Panc1 (cell line): ENCODE measurements at regions of chr6 and their contacts with region 1.

Region 1: DNA sequence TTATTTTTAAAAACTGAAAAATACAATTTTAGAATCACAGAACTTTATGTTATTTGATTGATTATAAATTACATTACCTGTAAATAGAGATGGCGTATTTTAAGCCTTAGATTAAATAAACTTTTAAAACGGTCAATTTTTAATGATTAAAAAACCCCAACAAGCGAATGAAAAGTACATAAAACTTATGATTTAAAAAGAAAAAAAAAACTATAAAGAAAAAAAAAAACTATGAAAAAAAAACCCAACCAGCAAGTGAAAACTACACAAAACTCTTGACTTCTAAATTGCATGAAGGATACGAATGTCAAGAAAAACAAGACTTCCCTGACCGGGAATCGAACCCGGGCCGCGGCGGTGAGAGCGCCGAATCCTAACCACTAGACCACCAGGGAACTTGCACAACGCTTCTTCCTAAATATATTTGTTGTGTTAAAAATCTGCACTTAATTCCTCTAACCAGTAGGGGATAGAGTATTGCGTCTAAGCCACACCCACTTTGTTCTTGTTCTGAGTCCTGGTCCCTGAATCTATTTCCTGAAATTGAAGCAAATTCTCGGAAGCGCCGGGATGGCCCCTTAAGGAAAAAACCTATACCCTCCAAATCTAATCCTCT is 10.7 kb upstream of the NCOA7 start:
- DNase-seq: peak; percentile 96
- ATAC-seq: peak; percentile 95
- H3K4me3 ChIP-seq: peak overlapping the region; percentile 88 to 93
- H3K27ac ChIP-seq: peak overlapping the region; percentile 97
- H3K4me1 ChIP-seq: peaks cover 5% of the 10 kb centered on the region
- H3K27me3 ChIP-seq: peaks cover 5% of the 10 kb centered on the region
- CTCF ChIP-seq: peak; percentile 17; the same call in 1 of the 2 replicates

Region 2: DNA sequence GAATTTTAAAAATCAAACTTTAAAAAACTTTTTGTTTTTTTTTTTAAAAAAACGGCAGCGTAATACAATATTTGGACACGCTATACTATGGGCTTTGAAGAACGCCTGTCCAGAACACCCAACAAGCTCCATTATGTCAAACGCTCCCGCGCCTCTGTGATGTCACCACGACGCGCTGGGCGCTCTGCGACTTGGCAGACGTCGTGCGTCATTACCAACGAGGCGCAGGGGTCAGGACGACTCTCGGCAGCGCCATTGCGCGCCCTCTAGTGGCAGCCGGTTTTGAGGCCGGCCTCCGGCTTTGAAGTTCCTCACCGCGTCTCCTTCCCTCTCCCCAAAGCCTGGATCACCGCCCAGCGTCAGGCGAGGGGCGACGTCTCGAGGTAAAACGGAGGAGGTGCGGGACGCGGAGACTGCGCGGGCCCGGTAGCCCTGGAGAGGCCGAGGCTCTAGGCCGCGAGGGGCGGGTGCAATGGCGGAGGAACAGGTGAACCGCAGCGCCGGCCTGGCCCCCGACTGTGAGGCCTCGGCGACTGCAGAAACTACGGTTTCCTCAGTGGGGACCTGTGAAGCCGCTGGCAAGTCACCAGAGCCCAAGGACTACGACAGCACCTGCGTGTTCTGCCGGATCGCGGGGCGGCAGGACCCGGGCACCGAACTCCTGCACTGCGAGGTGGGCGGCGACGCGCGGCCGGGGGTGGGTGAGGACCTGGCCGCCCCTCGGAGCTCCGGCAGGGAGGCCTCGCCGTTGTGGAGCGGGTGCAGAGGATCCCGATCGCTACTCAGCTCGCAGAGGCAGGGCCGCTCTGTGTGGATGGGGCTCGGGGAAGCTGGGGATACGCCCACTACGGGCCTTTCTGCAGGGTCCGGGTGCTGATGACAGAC is 176.7 kb after region 1 on chr6 and contains the start of gene HINT3:
- CTCF ChIA-PET with region 1: interaction called, 7 read pairs
- POLR2A ChIA-PET with region 1: no interaction called
- in situ Hi-C with region 1: no loop called
- intact Hi-C with region 1: loop called (anchors 2 kb)
- DNase-seq: peak; percentile 92
- ATAC-seq: peak; percentile 97
- H3K4me3 ChIP-seq: peak within 1 kb of the TSS; percentile 72 to 87
- H3K27ac ChIP-seq: peak within 1 kb of the TSS; percentile 81
- H3K4me1 ChIP-seq: peaks cover 23% of the 10 kb centered on the region
- H3K27me3 ChIP-seq: no peaks in the 10 kb centered on the region
- CTCF ChIP-seq: peak; percentile 100
- total RNA-seq, gene HINT3: 11.5 TPM

Region 3: GRCh38 chr6:125974214-125974866 is 194.3 kb after region 1 on chr6:
- CTCF ChIA-PET with region 1: no interaction called
- POLR2A ChIA-PET with region 1: no interaction called
- in situ Hi-C with region 1: no loop called
- intact Hi-C with region 1: loop called (anchors 5 kb)
- DNase-seq: no peak
- ATAC-seq: peak; percentile 91
- H3K4me3 ChIP-seq: no peak overlapping the region
- H3K27ac ChIP-seq: no peak overlapping the region
- H3K4me1 ChIP-seq: no peaks in the 10 kb centered on the region
- H3K27me3 ChIP-seq: no peaks in the 10 kb centered on the region
- CTCF ChIP-seq: peak; percentile 67; the same call in 1 of the 2 replicates